OCI-LY7 (cell line): ENCODE measurements at regions of chr7 and their contacts with region 1.

Region 1: GRCh38 chr7:154927624-154928143 is 75.2 kb downstream of the PAXIP1 start:
- DNase-seq: peak; percentile 91
- H3K4me3 ChIP-seq: peak overlapping the region; percentile 76
- H3K27ac ChIP-seq: peak overlapping the region; percentile 33
- H3K4me1 ChIP-seq: peaks cover 10% of the 10 kb centered on the region
- CTCF ChIP-seq: peak; percentile 94

Region 2: GRCh38 chr7:155003376-155004214 is 75.9 kb after region 1 on chr7:
- CTCF ChIA-PET with region 1: no interaction called
- POLR2A ChIA-PET with region 1: interaction called, 3 read pairs
- intact Hi-C with region 1: loop called (anchors 1 kb)
- DNase-seq: peak; percentile 89
- H3K4me3 ChIP-seq: peak overlapping the region; percentile 93
- H3K27ac ChIP-seq: peak overlapping the region; percentile 65
- H3K4me1 ChIP-seq: peaks cover 22% of the 10 kb centered on the region
- CTCF ChIP-seq: no peak

Region 3: GRCh38 chr7:155009570-155010157 is 82.0 kb after region 1 on chr7:
- CTCF ChIA-PET with region 1: no interaction called
- POLR2A ChIA-PET with region 1: interaction called, 3 read pairs
- intact Hi-C with region 1: loop called (anchors 1 kb)
- DNase-seq: peak; percentile 47
- H3K4me3 ChIP-seq: no peak overlapping the region
- H3K27ac ChIP-seq: no peak overlapping the region
- H3K4me1 ChIP-seq: peaks cover 8% of the 10 kb centered on the region
- CTCF ChIP-seq: peak; percentile 82

Region 4: GRCh38 chr7:155190688-155191087 is 263.0 kb after region 1 on chr7:
- CTCF ChIA-PET with region 1: no interaction called
- POLR2A ChIA-PET with region 1: no interaction called
- intact Hi-C with region 1: loop called (anchors 5 kb)
- DNase-seq: peak; percentile 44
- H3K4me3 ChIP-seq: no peak overlapping the region
- H3K27ac ChIP-seq: no peak overlapping the region
- H3K4me1 ChIP-seq: no peaks in the 10 kb centered on the region
- CTCF ChIP-seq: peak; percentile 86

Region 5: DNA sequence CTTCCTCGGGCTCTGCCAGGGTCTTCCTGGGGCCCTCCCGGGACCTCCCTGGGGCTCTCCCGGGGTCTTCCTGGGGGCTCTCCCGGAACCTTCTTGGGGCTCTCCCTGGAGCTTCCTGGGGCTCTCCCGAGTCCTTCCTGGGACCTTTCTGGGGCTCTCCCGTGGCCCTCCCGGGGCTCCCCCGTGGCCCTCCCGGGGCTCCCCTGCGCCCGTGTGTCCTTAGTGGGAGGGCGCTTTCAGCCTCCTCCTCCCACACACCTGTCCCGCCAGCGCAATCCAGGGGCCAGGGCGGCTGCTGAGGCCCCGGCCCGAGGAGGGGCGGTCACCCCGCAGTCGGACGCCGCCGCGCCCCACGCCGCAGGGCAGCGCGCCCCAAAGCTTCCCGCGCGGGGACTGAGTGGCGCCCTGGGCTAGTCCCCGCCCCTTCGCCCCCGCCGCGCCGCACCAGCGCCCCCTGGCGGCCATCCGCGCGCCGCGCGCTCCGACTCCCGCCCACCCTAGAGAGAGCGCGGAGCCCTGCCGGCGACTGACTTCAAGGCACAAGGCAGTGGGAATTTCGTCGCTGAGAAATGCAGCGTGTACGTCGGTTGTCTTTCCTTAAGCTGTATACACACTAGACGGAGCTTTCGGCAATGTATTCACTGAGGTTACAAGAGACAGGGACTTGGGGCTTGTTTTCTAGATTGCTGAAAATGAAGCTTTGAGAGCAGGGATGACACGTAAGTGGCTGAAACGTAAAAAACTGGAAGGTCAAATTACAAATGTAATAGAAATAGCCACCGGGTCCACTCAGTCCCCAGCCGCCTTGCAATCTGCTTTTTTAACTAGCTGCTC is 417.1 kb after region 1 on chr7:
- CTCF ChIA-PET with region 1: interaction called, 15 read pairs
- POLR2A ChIA-PET with region 1: interaction called, 5 read pairs
- intact Hi-C with region 1: loop called (anchors 1 kb)
- DNase-seq: peak; percentile 69
- H3K4me3 ChIP-seq: peak overlapping the region; percentile 69
- H3K27ac ChIP-seq: no peak overlapping the region
- H3K4me1 ChIP-seq: no peaks in the 10 kb centered on the region
- CTCF ChIP-seq: peak; percentile 85